K562 (cell line): ENCODE measurements at regions of chr7 and their contacts with region 1.

Region 1: GRCh38 chr7:2660585-2661408 is 27.2 kb upstream of the AMZ1 start:
- DNase-seq: peak; percentile 58 to 85 (median 76)
- ATAC-seq: peak; percentile 68
- H3K4me3 ChIP-seq: no peak overlapping the region
- H3K27ac ChIP-seq: no peak overlapping the region
- H3K4me1 ChIP-seq: peaks cover 4 to 79% of the 10 kb centered on the region in 2 experiments
- H3K27me3 ChIP-seq: peaks cover 0 to 11% of the 10 kb centered on the region in 2 experiments; a peak in 2 of 5 replicates
- CTCF ChIP-seq: peak; percentile 43 to 82 (median 53)
- EP300 ChIP-seq: no peak
- POLR2A ChIP-seq: no peak
- RAD21 ChIP-seq: peak in 1 of 2 experiments; percentile 39; a peak in 1 of 4 replicates

Region 2: GRCh38 chr7:2477447-2478398 is 183.1 kb before region 1 on chr7:
- CTCF ChIA-PET with region 1: no interaction called
- POLR2A ChIA-PET with region 1: interaction called, 3 read pairs
- in situ Hi-C with region 1: no loop called
- intact Hi-C with region 1: loop called (anchors 10 kb)
- DNase-seq: peak; percentile 64 to 81 (median 80)
- ATAC-seq: peak; percentile 94
- H3K4me3 ChIP-seq: no peak overlapping the region
- H3K27ac ChIP-seq: no peak overlapping the region
- H3K4me1 ChIP-seq: peaks cover 0 to 53% of the 10 kb centered on the region in 2 experiments; a peak in 3 of 5 replicates
- H3K27me3 ChIP-seq: peaks cover 15 to 36% of the 10 kb centered on the region in 2 experiments; a peak in 4 of 5 replicates
- CTCF ChIP-seq: peak; percentile 70 to 86 (median 79)
- EP300 ChIP-seq: no peak
- POLR2A ChIP-seq: no peak
- RAD21 ChIP-seq: peak; percentile 61 to 82